Heart left ventricle (tissue), 16 donors: ENCODE measurements at regions of chr4 and their contacts with region 1.

Region 1: GRCh38 chr4:101347557-101348366 is 436 bp upstream of the PPP3CA start:
- DNase-seq: peak; percentile 99 to 100 (median 100)
- ATAC-seq: peak; percentile 95 to 99 (median 97)
- H3K4me3 ChIP-seq: peak overlapping the region; percentile 56 to 97 (median 87)
- H3K27ac ChIP-seq: peak overlapping the region; percentile 88 to 99 (median 94)
- H3K4me1 ChIP-seq: peaks cover 0 to 36% (median 17%) of the 10 kb centered on the region in 12 donors
- H3K27me3 ChIP-seq: no peaks in the 10 kb centered on the region
- CTCF ChIP-seq: peak in 2 of 12 donors; percentile 7 to 20
- POLR2A ChIP-seq: peak in 1 of 2 donors; percentile 59

Region 2: GRCh38 chr4:100421361-100421978 is 926.3 kb before region 1 on chr4:
- intact Hi-C with region 1: loop called in 1 of 10 experiments (anchors 5 kb)
- DNase-seq: no peak
- ATAC-seq: peak in 1 of 4 donors; percentile 70
- H3K4me3 ChIP-seq: peak overlapping the region in 3 of 12 donors; percentile 27 to 36 (median 30)
- H3K27ac ChIP-seq: peak overlapping the region in 5 of 12 donors; percentile 12 to 37 (median 17)
- H3K4me1 ChIP-seq: peaks cover 0 to 29% (median 5%) of the 10 kb centered on the region in 12 donors
- H3K27me3 ChIP-seq: no peaks in the 10 kb centered on the region
- CTCF ChIP-seq: peak; percentile 27 to 70 (median 49)
- POLR2A ChIP-seq: no peak

Region 3: GRCh38 chr4:101175896-101176676 is 171.7 kb before region 1 on chr4:
- intact Hi-C with region 1: loop called in 7 of 10 experiments (anchors 5 to 10 kb)
- DNase-seq: peak in 4 of 5 donors; percentile 18 to 40 (median 28)
- ATAC-seq: peak; percentile 74 to 94 (median 88)
- H3K4me3 ChIP-seq: no peak overlapping the region
- H3K27ac ChIP-seq: peak overlapping the region in 6 of 12 donors; percentile 5 to 51 (median 25)
- H3K4me1 ChIP-seq: peaks cover 0 to 38% (median 17%) of the 10 kb centered on the region in 12 donors
- H3K27me3 ChIP-seq: no peaks in the 10 kb centered on the region
- CTCF ChIP-seq: no peak
- POLR2A ChIP-seq: no peak

Region 4: GRCh38 chr4:101282076-101282844 is 65.5 kb before region 1 on chr4:
- intact Hi-C with region 1: loop called in 3 of 10 experiments (anchors 5 to 10 kb)
- DNase-seq: no peak
- ATAC-seq: peak in 1 of 4 donors; percentile 45
- H3K4me3 ChIP-seq: no peak overlapping the region
- H3K27ac ChIP-seq: no peak overlapping the region
- H3K4me1 ChIP-seq: peaks cover 0 to 59% (median 25%) of the 10 kb centered on the region in 12 donors
- H3K27me3 ChIP-seq: no peaks in the 10 kb centered on the region
- CTCF ChIP-seq: no peak
- POLR2A ChIP-seq: no peak

Region 5: DNA sequence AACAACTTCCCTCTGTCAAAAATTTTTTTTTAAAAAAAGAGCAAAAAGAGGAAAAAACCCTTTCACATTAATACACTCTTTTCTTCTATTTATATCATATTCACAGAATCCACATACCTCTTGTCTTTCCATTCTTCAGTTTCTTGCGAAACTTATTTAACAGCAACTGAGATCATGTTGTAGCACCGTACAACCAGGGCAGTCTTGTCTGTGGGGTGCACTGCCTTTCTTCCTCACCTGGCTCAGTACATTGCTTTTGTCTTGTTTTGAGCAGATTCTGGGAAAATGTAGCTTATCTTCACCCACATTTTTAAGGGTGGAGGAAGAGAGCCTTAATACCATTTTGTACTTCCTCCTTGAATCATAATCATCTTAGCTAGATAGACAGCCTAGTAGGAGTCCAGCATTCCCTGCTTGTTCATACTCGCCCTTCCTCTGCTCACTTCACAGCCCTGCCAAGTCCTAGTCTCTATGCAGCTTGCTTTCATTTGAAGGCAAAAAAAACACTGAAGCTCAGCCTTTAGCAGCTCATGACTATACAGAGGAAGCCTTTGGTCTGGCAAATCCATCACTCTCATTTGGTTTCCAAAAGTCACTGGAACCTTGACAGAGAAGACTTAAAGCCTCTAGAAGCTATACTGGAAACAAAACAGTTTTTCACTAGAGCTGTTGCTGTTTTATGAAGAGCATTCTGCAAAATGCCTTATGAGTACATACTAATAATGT is 302.2 kb after region 1 on chr4:
- intact Hi-C with region 1: loop called in 1 of 10 experiments (anchors 5 kb)
- DNase-seq: no peak
- ATAC-seq: peak in 3 of 4 donors; percentile 37 to 59 (median 52)
- H3K4me3 ChIP-seq: no peak overlapping the region
- H3K27ac ChIP-seq: peak overlapping the region in 6 of 12 donors; percentile 18 to 66 (median 31)
- H3K4me1 ChIP-seq: peaks cover 0 to 18% (median 9%) of the 10 kb centered on the region in 12 donors
- H3K27me3 ChIP-seq: no peaks in the 10 kb centered on the region
- CTCF ChIP-seq: no peak
- POLR2A ChIP-seq: no peak

Region 6: DNA sequence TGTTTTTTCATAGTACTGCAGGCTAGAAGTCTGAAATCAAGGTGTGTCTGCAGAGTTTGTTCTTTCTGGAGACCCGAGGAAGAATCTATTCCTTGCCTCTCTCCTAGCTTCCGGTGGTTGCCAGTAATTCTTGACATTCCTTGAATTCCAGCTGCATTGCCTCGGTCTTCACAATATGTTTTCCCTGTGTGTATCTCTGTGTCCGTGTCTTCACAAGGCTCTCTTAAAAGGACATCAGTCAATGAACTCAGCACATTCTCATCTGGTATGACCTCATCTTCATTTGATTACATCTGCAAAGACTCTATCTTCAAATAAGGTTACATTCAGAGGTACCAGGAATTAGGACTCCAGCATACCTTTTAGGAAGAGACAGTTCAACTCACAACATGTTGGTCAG is 606.2 kb after region 1 on chr4:
- intact Hi-C with region 1: no loop called
- DNase-seq: no peak
- ATAC-seq: no peak
- H3K4me3 ChIP-seq: no peak overlapping the region
- H3K27ac ChIP-seq: no peak overlapping the region
- H3K4me1 ChIP-seq: no peaks in the 10 kb centered on the region
- H3K27me3 ChIP-seq: no peaks in the 10 kb centered on the region
- CTCF ChIP-seq: no peak
- POLR2A ChIP-seq: no peak